ENCODE measurements at regions of chr14 and their contacts with region 1.

Region 1: GRCh38 chr14:21334202-21334899 is 49.5 kb downstream of the SUPT16H start:
- DNase-seq: no peak
- H3K4me3 Mint-ChIP-seq: no peak overlapping the region
- H3K27ac Mint-ChIP-seq: no peak overlapping the region
- H3K4me1 Mint-ChIP-seq: no peaks in the 10 kb centered on the region
- H3K27me3 Mint-ChIP-seq: no peaks in the 10 kb centered on the region

Region 2: GRCh38 chr14:21320913-21321312 is 13.4 kb before region 1 on chr14:
- CTCF ChIA-PET with region 1: no interaction called
- intact Hi-C with region 1: no loop called
- DNase-seq: no peak
- H3K4me3 Mint-ChIP-seq: no peak overlapping the region
- H3K27ac Mint-ChIP-seq: no peak overlapping the region
- H3K4me1 Mint-ChIP-seq: peaks cover 8% of the 10 kb centered on the region
- H3K27me3 Mint-ChIP-seq: no peaks in the 10 kb centered on the region

Region 3: DNA sequence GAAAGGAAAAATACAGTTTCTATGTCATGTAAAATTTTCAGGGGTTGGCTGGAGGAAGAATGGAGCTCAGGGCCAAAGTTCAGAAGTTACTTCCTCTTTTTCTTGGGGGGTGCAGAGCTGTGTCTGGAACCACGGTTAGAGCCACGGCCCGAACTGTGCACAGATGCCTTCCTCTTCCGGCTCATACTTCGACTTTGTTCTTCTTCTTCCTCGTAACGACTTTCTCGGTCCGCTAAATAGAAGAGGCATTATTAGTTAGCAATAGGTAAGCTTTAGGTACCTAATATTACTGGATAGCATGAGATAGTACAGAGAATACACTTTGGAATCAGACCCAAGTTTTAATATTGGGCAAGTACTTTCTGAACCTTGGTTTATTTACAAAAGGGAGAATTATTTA is 18.2 kb after region 1 on chr14:
- CTCF ChIA-PET with region 1: interaction called, 3 read pairs
- intact Hi-C with region 1: loop called (anchors 2 kb)
- DNase-seq: no peak
- H3K4me3 Mint-ChIP-seq: no peak overlapping the region
- H3K27ac Mint-ChIP-seq: no peak overlapping the region
- H3K4me1 Mint-ChIP-seq: no peaks in the 10 kb centered on the region
- H3K27me3 Mint-ChIP-seq: no peaks in the 10 kb centered on the region